Activated CD8-positive, alpha-beta T cell treated with anti-CD3 and anti-CD28 coated beads, Interleukin-2, amount 10 ng/mL, durations not matched to agents 7 days and 5 days (primary cell): ENCODE measurements at regions of chr11 and their contacts with region 1.

Region 1: GRCh38 chr11:123020968-123021367 is 39.3 kb upstream of the BSX start:
- DNase-seq: peak; percentile 53
- ATAC-seq: peak; percentile 74
- H3K4me3 Mint-ChIP-seq: no peak overlapping the region
- H3K27ac Mint-ChIP-seq: no peak overlapping the region
- H3K4me1 Mint-ChIP-seq: peaks cover 7% of the 10 kb centered on the region
- H3K27me3 Mint-ChIP-seq: peaks cover 16% of the 10 kb centered on the region

Region 2: DNA sequence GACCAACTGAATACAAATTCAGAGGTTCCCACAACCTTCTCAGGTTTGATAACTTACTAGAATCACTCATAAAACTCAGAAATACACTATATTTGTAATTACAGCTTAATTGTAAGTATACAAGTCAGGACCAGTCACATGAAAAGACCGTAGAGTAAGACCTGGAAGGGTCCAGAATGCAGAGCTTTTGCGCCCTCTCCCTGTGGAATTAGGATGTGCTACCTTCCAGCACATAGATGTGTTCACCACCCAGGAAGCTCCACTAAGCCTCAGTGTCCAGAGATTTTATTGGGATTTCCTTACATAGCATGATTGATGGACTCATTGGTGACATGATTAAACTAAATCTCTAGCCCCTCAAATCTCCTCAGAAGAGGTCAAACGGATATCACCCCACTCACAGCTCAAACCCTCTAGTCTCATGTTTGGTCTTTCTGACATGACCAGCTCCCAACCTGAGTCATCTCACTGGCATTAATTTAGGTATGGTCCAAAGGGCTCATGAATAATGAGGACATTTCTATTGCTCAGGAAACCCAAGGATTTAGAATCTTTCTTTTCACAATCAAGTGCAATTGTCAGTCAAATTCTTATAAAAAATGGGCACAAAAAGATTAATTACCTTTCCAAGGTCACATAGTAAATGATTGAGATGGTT is 442.7 kb before region 1 on chr11:
- CTCF ChIA-PET with region 1: interaction called, 10 read pairs
- POLR2A ChIA-PET with region 1: no interaction called
- DNase-seq: no peak
- ATAC-seq: no peak
- H3K4me3 Mint-ChIP-seq: no peak overlapping the region
- H3K27ac Mint-ChIP-seq: no peak overlapping the region
- H3K4me1 Mint-ChIP-seq: peaks cover 12% of the 10 kb centered on the region
- H3K27me3 Mint-ChIP-seq: peaks cover 6% of the 10 kb centered on the region

Region 3: DNA sequence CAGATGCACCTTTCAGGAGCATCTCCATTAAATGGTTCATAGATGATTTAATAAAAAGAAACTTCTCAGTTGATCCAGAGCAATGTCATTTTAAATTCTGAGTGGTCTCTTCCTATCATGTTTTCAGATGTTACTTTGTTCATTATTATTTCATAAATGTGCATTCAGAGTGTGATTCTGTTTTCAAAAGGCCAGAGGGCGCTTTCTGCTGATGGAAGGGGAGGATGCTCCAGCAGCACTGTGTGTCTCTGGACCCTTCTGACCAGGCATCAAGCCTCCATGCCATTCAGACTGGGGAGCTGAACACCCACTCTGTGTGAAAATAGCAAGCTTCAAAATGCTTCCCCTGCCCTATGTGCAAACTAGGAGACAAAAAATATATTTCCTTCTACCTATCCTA is 206.6 kb before region 1 on chr11:
- CTCF ChIA-PET with region 1: interaction called, 14 read pairs
- POLR2A ChIA-PET with region 1: no interaction called
- DNase-seq: peak; percentile 30
- ATAC-seq: no peak
- H3K4me3 Mint-ChIP-seq: no peak overlapping the region
- H3K27ac Mint-ChIP-seq: no peak overlapping the region
- H3K4me1 Mint-ChIP-seq: peaks cover 41% of the 10 kb centered on the region
- H3K27me3 Mint-ChIP-seq: no peaks in the 10 kb centered on the region

Region 4: GRCh38 chr11:122951211-122951610 is 69.8 kb before region 1 on chr11:
- CTCF ChIA-PET with region 1: interaction called, 10 read pairs
- POLR2A ChIA-PET with region 1: interaction called, 3 read pairs
- DNase-seq: no peak
- ATAC-seq: no peak
- H3K4me3 Mint-ChIP-seq: no peak overlapping the region
- H3K27ac Mint-ChIP-seq: no peak overlapping the region
- H3K4me1 Mint-ChIP-seq: peaks cover 4% of the 10 kb centered on the region
- H3K27me3 Mint-ChIP-seq: no peaks in the 10 kb centered on the region

Region 5: GRCh38 chr11:123054301-123055065 is 33.5 kb after region 1 on chr11:
- CTCF ChIA-PET with region 1: interaction called, 96 read pairs
- POLR2A ChIA-PET with region 1: no interaction called
- DNase-seq: peak; percentile 52
- ATAC-seq: peak; percentile 45
- H3K4me3 Mint-ChIP-seq: no peak overlapping the region
- H3K27ac Mint-ChIP-seq: peak overlapping the region; percentile 61
- H3K4me1 Mint-ChIP-seq: peaks cover 43% of the 10 kb centered on the region
- H3K27me3 Mint-ChIP-seq: no peaks in the 10 kb centered on the region

Region 6: DNA sequence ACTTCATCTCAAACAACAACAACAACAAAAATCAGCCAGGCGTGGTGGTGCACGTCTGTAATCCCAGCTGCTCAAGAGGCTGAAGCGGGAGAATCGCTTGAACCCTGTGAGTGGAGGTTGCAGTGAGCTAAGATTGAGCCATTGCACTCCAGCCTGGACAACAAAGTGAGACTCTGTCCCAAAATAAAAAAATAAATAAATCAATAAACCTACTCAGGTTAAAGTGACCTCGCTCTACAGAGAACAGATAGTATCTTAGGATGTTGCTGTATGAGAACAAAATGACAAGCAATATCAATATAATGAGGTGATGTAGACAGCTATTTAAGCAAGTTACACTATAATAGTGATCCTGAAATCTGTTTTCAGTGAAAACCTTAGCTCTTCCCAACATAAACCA is 75.4 kb after region 1 on chr11:
- CTCF ChIA-PET with region 1: no interaction called
- POLR2A ChIA-PET with region 1: no interaction called
- DNase-seq: no peak
- ATAC-seq: no peak
- H3K4me3 Mint-ChIP-seq: no peak overlapping the region
- H3K27ac Mint-ChIP-seq: no peak overlapping the region
- H3K4me1 Mint-ChIP-seq: peaks cover 12% of the 10 kb centered on the region
- H3K27me3 Mint-ChIP-seq: no peaks in the 10 kb centered on the region